Mammary epithelial cell (primary cell): ENCODE measurements at regions of chr20 and their contacts with region 1.

Region 1: GRCh38 chr20:45971675-45972499 is at the start of gene ZNF335:
- DNase-seq: peak; percentile 97
- H3K4me3 ChIP-seq: peak within 1 kb of the TSS; percentile 89 to 93 (median 90)
- H3K27ac ChIP-seq: peak within 1 kb of the TSS; percentile 100
- H3K4me1 ChIP-seq: peaks cover 24% of the 10 kb centered on the region
- H3K27me3 ChIP-seq: no peaks in the 10 kb centered on the region
- CTCF ChIP-seq: peak in 1 of 2 donors; percentile 47
- total RNA-seq, gene ZNF335: 13.8 to 21.7 TPM

Region 2: GRCh38 chr20:45890985-45891983 is 80.6 kb before region 1 on chr20 and contains the starts of genes CTSA and NEURL2:
- CTCF ChIA-PET with region 1: no interaction called
- dilution Hi-C with region 1: no loop called
- in situ Hi-C with region 1: no loop called
- intact Hi-C with region 1: loop called (anchors 5 kb)
- DNase-seq: peak; percentile 80
- H3K4me3 ChIP-seq: peak within 1 kb of the TSS; percentile 75 to 93 (median 89)
- H3K27ac ChIP-seq: peak within 1 kb of the TSS; percentile 22
- H3K4me1 ChIP-seq: peaks cover 30% of the 10 kb centered on the region
- H3K27me3 ChIP-seq: no peaks in the 10 kb centered on the region
- CTCF ChIP-seq: no peak
- total RNA-seq, gene CTSA: 32.5 to 68.8 TPM
- total RNA-seq, gene NEURL2: 2.1 to 3.3 TPM

Region 3: GRCh38 chr20:45993197-45993951 is 21.5 kb after region 1 on chr20:
- CTCF ChIA-PET with region 1: no interaction called
- dilution Hi-C with region 1: no loop called
- in situ Hi-C with region 1: no loop called
- intact Hi-C with region 1: loop called (anchors 1 kb)
- DNase-seq: peak; percentile 99
- H3K4me3 ChIP-seq: no peak overlapping the region
- H3K27ac ChIP-seq: peak overlapping the region; percentile 58
- H3K4me1 ChIP-seq: peaks cover 17% of the 10 kb centered on the region
- H3K27me3 ChIP-seq: no peaks in the 10 kb centered on the region
- CTCF ChIP-seq: no peak

Region 4: DNA sequence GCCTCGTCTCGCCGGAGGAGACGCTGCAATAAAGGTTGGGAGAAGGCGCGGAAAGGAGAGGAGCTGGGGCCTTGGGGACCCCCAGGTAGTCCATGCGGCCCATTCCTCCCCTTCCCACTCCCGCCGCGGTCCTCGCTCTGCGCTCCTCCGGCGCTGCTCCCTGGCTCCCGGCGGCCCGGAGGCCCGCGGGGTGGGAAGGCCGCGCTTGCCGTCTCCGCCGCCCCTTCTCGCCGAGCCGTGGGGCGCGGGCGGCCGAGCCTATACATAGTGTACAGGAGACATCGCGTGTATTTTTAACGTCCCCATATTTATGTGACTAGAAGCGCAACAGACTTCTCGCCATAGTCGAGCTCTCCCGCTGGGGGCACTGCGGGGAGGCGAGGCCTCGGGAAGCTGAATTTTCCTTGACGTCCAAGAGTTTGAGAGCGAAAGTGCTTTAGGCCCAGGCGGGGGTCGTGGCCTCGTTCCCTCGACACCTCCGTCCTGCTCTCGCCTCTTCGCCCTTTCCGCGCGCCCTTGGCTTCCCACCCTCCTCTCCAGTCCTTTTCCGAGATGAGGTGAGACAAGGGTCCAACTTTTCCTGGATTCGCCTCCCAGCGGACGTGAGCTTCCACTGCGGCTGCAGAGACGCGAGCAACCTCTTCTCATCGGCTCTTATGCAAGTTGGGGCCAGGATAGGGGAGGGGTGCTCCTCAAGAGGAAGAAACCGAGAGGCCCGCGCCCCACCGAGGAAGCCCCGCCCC is 86.1 kb after region 1 on chr20:
- CTCF ChIA-PET with region 1: no interaction called
- dilution Hi-C with region 1: loop called (anchors 5 kb)
- in situ Hi-C with region 1: no loop called
- intact Hi-C with region 1: no loop called
- DNase-seq: no peak
- H3K4me3 ChIP-seq: no peak overlapping the region
- H3K27ac ChIP-seq: no peak overlapping the region
- H3K4me1 ChIP-seq: no peaks in the 10 kb centered on the region
- H3K27me3 ChIP-seq: peaks cover 10% of the 10 kb centered on the region
- CTCF ChIP-seq: peak; percentile 22 to 32